HepG2 (cell line): ENCODE measurements at regions of chr2 and their contacts with region 1.

Region 1: DNA sequence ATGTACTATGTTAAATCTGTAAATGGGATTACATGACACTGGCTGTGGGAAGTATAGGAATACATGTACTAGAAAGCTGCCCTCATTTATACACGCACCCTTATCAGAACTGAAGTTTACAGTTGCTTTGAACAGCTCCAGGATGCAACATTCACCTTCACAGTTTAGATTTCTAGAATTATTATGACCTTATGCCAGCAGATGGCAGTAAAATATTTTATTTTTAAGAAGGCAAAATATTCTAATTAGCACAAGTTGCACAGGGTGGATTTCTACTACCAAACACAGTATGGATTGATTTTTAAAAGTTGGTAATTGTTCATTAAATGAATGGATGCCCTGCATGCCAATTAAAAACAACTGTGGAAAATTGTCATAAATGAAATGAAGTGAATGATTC is 670.4 kb downstream of the KCNJ3 start:
- DNase-seq: peak; percentile 12
- ATAC-seq: peak; percentile 44; the same call in 2 of the 3 replicates
- H3K4me3 ChIP-seq: no peak overlapping the region
- H3K27ac ChIP-seq: no peak overlapping the region
- H3K4me1 ChIP-seq: no peaks in the 10 kb centered on the region
- H3K27me3 ChIP-seq: no peaks in the 10 kb centered on the region
- CTCF ChIP-seq: peak; percentile 33; the same call in 1 of the 2 replicates
- EP300 ChIP-seq: no peak
- POLR2A ChIP-seq: no peak
- RAD21 ChIP-seq: no peak

Region 2: GRCh38 chr2:155382776-155383175 is 13.8 kb after region 1 on chr2:
- CTCF ChIA-PET with region 1: no interaction called
- POLR2A ChIA-PET with region 1: no interaction called
- in situ Hi-C with region 1: no loop called
- intact Hi-C with region 1: no loop called
- DNase-seq: no peak
- ATAC-seq: no peak
- H3K4me3 ChIP-seq: no peak overlapping the region
- H3K27ac ChIP-seq: no peak overlapping the region
- H3K4me1 ChIP-seq: no peaks in the 10 kb centered on the region
- H3K27me3 ChIP-seq: no peaks in the 10 kb centered on the region
- CTCF ChIP-seq: no peak
- EP300 ChIP-seq: no peak
- POLR2A ChIP-seq: no peak
- RAD21 ChIP-seq: no peak

Region 3: GRCh38 chr2:155815886-155816285 is 447.0 kb after region 1 on chr2:
- CTCF ChIA-PET with region 1: no interaction called
- POLR2A ChIA-PET with region 1: no interaction called
- in situ Hi-C with region 1: no loop called
- intact Hi-C with region 1: loop called (anchors 2 kb)
- DNase-seq: peak; percentile 54
- ATAC-seq: peak; percentile 96
- H3K4me3 ChIP-seq: no peak overlapping the region
- H3K27ac ChIP-seq: no peak overlapping the region
- H3K4me1 ChIP-seq: no peaks in the 10 kb centered on the region
- H3K27me3 ChIP-seq: no peaks in the 10 kb centered on the region
- CTCF ChIP-seq: peak; percentile 59
- EP300 ChIP-seq: no peak
- POLR2A ChIP-seq: no peak
- RAD21 ChIP-seq: peak; percentile 39

Region 4: GRCh38 chr2:157194097-157194688 is 1825.3 kb after region 1 on chr2:
- CTCF ChIA-PET with region 1: interaction called, 5 read pairs
- POLR2A ChIA-PET with region 1: no interaction called
- in situ Hi-C with region 1: loop called (anchors 10 kb)
- intact Hi-C with region 1: loop called (anchors 2 kb)
- DNase-seq: peak; percentile 46
- ATAC-seq: peak; percentile 70
- H3K4me3 ChIP-seq: no peak overlapping the region
- H3K27ac ChIP-seq: no peak overlapping the region
- H3K4me1 ChIP-seq: no peaks in the 10 kb centered on the region
- H3K27me3 ChIP-seq: no peaks in the 10 kb centered on the region; a peak in 1 of 5 replicates
- CTCF ChIP-seq: peak; percentile 71
- EP300 ChIP-seq: no peak
- POLR2A ChIP-seq: no peak
- RAD21 ChIP-seq: 0 out of 2 replicates have a peak, but pooled peaks have one; percentile 34